ENCODE measurements at regions of chr10 and their contacts with region 1.

Region 1: GRCh38 chr10:124802313-124802675 is 675 bp downstream of the ABRAXAS2 start:
- DNase-seq: no peak
- ATAC-seq: peak; percentile 43
- H3K4me3 Mint-ChIP-seq: peak overlapping the region; percentile 91
- H3K27ac Mint-ChIP-seq: peak overlapping the region; percentile 90
- H3K4me1 Mint-ChIP-seq: peaks cover 19% of the 10 kb centered on the region
- H3K27me3 Mint-ChIP-seq: no peaks in the 10 kb centered on the region

Region 2: GRCh38 chr10:124106241-124106879 is 695.9 kb before region 1 on chr10:
- CTCF ChIA-PET with region 1: no interaction called
- POLR2A ChIA-PET with region 1: no interaction called
- intact Hi-C with region 1: no loop called
- DNase-seq: no peak
- ATAC-seq: peak; percentile 36
- H3K4me3 Mint-ChIP-seq: no peak overlapping the region
- H3K27ac Mint-ChIP-seq: no peak overlapping the region
- H3K4me1 Mint-ChIP-seq: peaks cover 3% of the 10 kb centered on the region
- H3K27me3 Mint-ChIP-seq: peaks cover 13% of the 10 kb centered on the region

Region 3: GRCh38 chr10:124697830-124698544 is 104.3 kb before region 1 on chr10:
- CTCF ChIA-PET with region 1: no interaction called
- POLR2A ChIA-PET with region 1: no interaction called
- intact Hi-C with region 1: no loop called
- DNase-seq: peak; percentile 71
- ATAC-seq: peak; percentile 47
- H3K4me3 Mint-ChIP-seq: peak overlapping the region; percentile 56
- H3K27ac Mint-ChIP-seq: peak overlapping the region; percentile 90
- H3K4me1 Mint-ChIP-seq: peaks cover 93% of the 10 kb centered on the region
- H3K27me3 Mint-ChIP-seq: no peaks in the 10 kb centered on the region

Region 4: GRCh38 chr10:124791378-124792348 is 10.6 kb before region 1 on chr10 and contains the start of gene EEF1AKMT2:
- CTCF ChIA-PET with region 1: interaction called, 12 read pairs
- POLR2A ChIA-PET with region 1: interaction called, 10 read pairs
- intact Hi-C with region 1: loop called (anchors 1 kb)
- DNase-seq: peak; percentile 91
- ATAC-seq: peak; percentile 93
- H3K4me3 Mint-ChIP-seq: peak within 1 kb of the TSS; percentile 98
- H3K27ac Mint-ChIP-seq: peak within 1 kb of the TSS; percentile 90
- H3K4me1 Mint-ChIP-seq: peaks cover 16% of the 10 kb centered on the region
- H3K27me3 Mint-ChIP-seq: no peaks in the 10 kb centered on the region
- total RNA-seq, gene EEF1AKMT2: 21.4 to 28.4 TPM

Region 5: GRCh38 chr10:124864421-124865193 is 62.3 kb after region 1 on chr10:
- CTCF ChIA-PET with region 1: no interaction called
- POLR2A ChIA-PET with region 1: no interaction called
- intact Hi-C with region 1: no loop called
- DNase-seq: no peak
- ATAC-seq: no peak
- H3K4me3 Mint-ChIP-seq: no peak overlapping the region
- H3K27ac Mint-ChIP-seq: no peak overlapping the region
- H3K4me1 Mint-ChIP-seq: no peaks in the 10 kb centered on the region
- H3K27me3 Mint-ChIP-seq: no peaks in the 10 kb centered on the region

Region 6: GRCh38 chr10:124875596-124875995 is 73.3 kb after region 1 on chr10:
- CTCF ChIA-PET with region 1: no interaction called
- POLR2A ChIA-PET with region 1: no interaction called
- intact Hi-C with region 1: no loop called
- DNase-seq: no peak
- ATAC-seq: no peak
- H3K4me3 Mint-ChIP-seq: no peak overlapping the region
- H3K27ac Mint-ChIP-seq: no peak overlapping the region
- H3K4me1 Mint-ChIP-seq: no peaks in the 10 kb centered on the region
- H3K27me3 Mint-ChIP-seq: peaks cover 5% of the 10 kb centered on the region

Region 7: GRCh38 chr10:125719146-125720001 is 917.1 kb after region 1 on chr10 and contains the start of gene EDRF1:
- CTCF ChIA-PET with region 1: no interaction called
- POLR2A ChIA-PET with region 1: no interaction called
- intact Hi-C with region 1: loop called in 1 of 2 experiments (anchors 1 kb)
- DNase-seq: peak; percentile 99
- ATAC-seq: peak; percentile 97
- H3K4me3 Mint-ChIP-seq: peak within 1 kb of the TSS; percentile 82
- H3K27ac Mint-ChIP-seq: peak within 1 kb of the TSS; percentile 92
- H3K4me1 Mint-ChIP-seq: peaks cover 26% of the 10 kb centered on the region
- H3K27me3 Mint-ChIP-seq: no peaks in the 10 kb centered on the region
- total RNA-seq, gene EDRF1: 29.6 to 30.8 TPM

Region 8: DNA sequence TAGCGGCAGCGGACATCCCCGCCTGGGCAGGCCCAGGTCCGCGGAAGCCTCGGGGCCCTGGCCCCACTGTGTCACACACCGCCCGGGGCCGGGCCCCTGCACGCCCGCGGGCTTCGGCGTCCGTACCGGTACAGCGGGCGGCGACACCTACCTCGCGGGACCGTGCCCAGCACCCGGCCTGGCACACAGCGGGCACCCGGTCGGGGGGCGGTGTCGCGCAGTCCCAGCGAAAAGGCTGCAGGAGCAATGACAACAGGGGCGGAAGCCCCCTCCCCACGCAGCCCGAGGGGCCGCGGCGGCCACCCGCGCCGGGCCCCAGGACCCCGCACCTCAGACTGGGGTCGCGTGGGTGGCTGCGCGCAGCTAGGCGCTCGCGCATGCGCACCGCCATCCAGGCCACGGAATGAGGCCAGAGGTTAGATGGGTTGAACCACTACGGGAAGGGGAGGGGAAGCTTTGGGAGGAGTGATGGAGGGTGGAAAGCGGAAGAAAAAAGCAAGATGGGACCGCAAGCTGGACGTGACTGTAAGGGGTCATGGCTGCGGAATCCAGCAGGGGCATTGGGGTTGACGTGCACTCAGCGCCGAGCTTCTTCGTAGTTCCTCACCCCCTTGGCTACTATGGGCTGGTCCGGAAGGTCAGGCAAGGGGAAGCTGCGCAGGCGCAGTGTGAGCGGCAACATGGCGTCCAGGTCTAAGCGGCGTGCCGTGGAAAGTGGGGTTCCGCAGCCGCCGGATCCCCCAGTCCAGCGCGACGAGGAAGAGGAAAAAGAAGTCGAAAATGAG is 1020.8 kb after region 1 on chr10 and contains the starts of genes BCCIP and UROS:
- CTCF ChIA-PET with region 1: no interaction called
- POLR2A ChIA-PET with region 1: no interaction called
- intact Hi-C with region 1: loop called in 1 of 2 experiments (anchors 5 kb)
- DNase-seq: peak; percentile 94
- ATAC-seq: peak; percentile 87
- H3K4me3 Mint-ChIP-seq: peak within 1 kb of the TSS; percentile 68
- H3K27ac Mint-ChIP-seq: peak within 1 kb of the TSS; percentile 27
- H3K4me1 Mint-ChIP-seq: peaks cover 42% of the 10 kb centered on the region
- H3K27me3 Mint-ChIP-seq: no peaks in the 10 kb centered on the region
- total RNA-seq, gene BCCIP: 106 to 115 TPM
- total RNA-seq, gene UROS: 37.3 to 39.6 TPM

Measured in activated CD4-positive, alpha-beta T cell treated with anti-CD3 and anti-CD28 coated beads for 36 hours (primary cell).